Activated CD4-positive, alpha-beta T cell treated with anti-CD3 and anti-CD28 coated beads, Interleukin-2, amount 10 ng/mL, durations not matched to agents 7 days and 5 days (primary cell): ENCODE measurements at regions of chr10 and their contacts with region 1.

Region 1: DNA sequence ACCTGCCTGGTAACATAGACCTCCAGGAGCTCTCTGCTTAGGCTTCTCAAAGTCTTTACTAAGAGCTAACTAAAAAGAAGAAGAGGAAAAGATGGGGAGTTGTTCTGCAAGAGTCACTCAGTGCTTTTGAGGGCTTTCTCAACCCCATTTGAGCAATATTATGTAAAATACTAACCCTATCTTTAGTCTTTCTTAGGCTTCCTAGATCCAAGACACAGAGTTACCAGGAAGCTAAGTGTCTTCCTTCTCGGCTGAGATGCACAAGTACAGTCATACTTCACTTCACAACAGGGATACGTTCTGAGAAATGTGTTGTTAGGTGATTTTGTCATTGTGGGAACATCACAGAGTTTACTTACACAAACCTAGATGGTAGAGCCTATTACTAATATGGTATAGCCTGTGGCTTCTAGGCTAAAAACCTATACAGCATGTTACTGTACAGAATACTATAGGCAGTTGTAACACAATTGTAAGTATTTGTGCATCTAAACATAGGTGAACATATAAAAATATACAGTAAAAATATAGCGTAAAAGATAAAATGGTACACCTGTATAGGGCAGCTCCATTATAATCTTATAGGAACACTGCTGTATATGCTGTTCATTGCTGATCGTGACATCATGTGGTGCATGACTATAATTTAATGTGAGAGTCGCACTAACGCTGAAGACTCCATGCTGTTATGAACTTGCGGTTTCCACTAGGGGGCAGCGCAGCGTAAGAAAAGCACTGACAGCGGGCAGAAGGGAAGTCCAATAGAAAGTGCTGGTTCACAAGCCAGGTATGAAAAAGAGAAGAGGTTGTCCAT is 16.3 kb downstream of the ANKRD22 start:
- DNase-seq: peak; percentile 92
- H3K4me3 Mint-ChIP-seq: no peak overlapping the region
- H3K27ac Mint-ChIP-seq: no peak overlapping the region
- H3K4me1 Mint-ChIP-seq: peaks cover 32% of the 10 kb centered on the region
- H3K27me3 Mint-ChIP-seq: no peaks in the 10 kb centered on the region

Region 2: DNA sequence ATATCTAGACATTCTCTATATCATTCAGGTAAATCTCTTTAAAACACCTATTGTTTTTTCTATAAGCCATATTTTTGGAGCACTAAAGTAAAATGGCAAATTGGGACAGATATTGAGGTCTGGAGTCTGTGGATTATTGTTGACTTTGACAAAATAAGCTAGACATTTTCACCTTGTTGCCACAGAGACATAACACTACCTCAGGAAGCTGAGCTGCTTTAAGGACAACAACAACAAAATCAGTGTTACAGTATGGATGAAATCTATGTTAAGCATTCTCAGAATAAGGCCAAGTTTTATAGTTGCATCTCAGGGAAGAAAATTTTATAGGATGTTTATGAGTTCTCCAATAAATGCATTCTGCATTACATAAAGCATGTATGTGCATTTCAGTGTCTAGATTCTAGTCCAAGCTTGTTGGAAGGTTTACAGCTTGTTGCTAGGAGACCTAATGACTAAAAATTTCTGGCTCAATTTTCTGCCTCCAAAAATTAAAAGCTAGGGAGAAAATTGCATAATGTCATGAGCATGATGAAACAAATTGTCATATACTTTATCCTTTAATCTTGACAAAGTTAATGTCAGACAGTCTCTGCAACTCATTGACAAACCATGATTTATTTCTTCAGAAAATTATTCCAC is 14.4 kb before region 1 on chr10:
- CTCF ChIA-PET with region 1: interaction called, 17 read pairs
- POLR2A ChIA-PET with region 1: no interaction called
- DNase-seq: no peak
- H3K4me3 Mint-ChIP-seq: no peak overlapping the region
- H3K27ac Mint-ChIP-seq: no peak overlapping the region
- H3K4me1 Mint-ChIP-seq: peaks cover 45% of the 10 kb centered on the region
- H3K27me3 Mint-ChIP-seq: no peaks in the 10 kb centered on the region

Region 3: GRCh38 chr10:88853155-88853881 is 18.0 kb after region 1 on chr10:
- CTCF ChIA-PET with region 1: interaction called, 12 read pairs
- POLR2A ChIA-PET with region 1: no interaction called
- DNase-seq: no peak
- H3K4me3 Mint-ChIP-seq: no peak overlapping the region
- H3K27ac Mint-ChIP-seq: no peak overlapping the region
- H3K4me1 Mint-ChIP-seq: peaks cover 18% of the 10 kb centered on the region
- H3K27me3 Mint-ChIP-seq: peaks cover 6% of the 10 kb centered on the region